H1 (cell line): ENCODE measurements at regions of chr4 and their contacts with region 1.

Region 1: GRCh38 chr4:184983672-184984356 is 34.5 kb upstream of the HELT start:
- DNase-seq: peak in 1 of 2 experiments; percentile 91
- H3K4me3 ChIP-seq: no peak overlapping the region
- H3K27ac ChIP-seq: no peak overlapping the region
- H3K4me1 ChIP-seq: peaks cover 0 to 3% (median 0%) of the 10 kb centered on the region in 4 experiments; a peak in 1 of 7 replicates
- H3K27me3 ChIP-seq: peaks cover 0 to 3% (median 0%) of the 10 kb centered on the region in 4 experiments; a peak in 2 of 7 replicates
- CTCF ChIP-seq: peak; percentile 31 to 51 (median 47)
- EP300 ChIP-seq: no peak
- POLR2A ChIP-seq: no peak
- RAD21 ChIP-seq: peak; percentile 73 to 78

Region 2: GRCh38 chr4:184745831-184746795 is 237.7 kb before region 1 on chr4:
- CTCF ChIA-PET with region 1: interaction called, 12 read pairs
- POLR2A ChIA-PET with region 1: interaction called, 3 read pairs
- DNase-seq: peak in 1 of 2 experiments; percentile 76
- H3K4me3 ChIP-seq: no peak overlapping the region
- H3K27ac ChIP-seq: no peak overlapping the region
- H3K4me1 ChIP-seq: peaks cover 8 to 21% (median 13%) of the 10 kb centered on the region in 4 experiments
- H3K27me3 ChIP-seq: no peaks in the 10 kb centered on the region; a peak in 2 of 7 replicates
- CTCF ChIP-seq: peak; percentile 60 to 73 (median 65)
- EP300 ChIP-seq: no peak
- POLR2A ChIP-seq: no peak
- RAD21 ChIP-seq: peak; percentile 84 to 87

Region 3: GRCh38 chr4:184838249-184839074 is 145.4 kb before region 1 on chr4:
- CTCF ChIA-PET with region 1: no interaction called
- POLR2A ChIA-PET with region 1: no interaction called
- DNase-seq: no peak
- H3K4me3 ChIP-seq: no peak overlapping the region
- H3K27ac ChIP-seq: no peak overlapping the region
- H3K4me1 ChIP-seq: no peaks in the 10 kb centered on the region
- H3K27me3 ChIP-seq: no peaks in the 10 kb centered on the region
- CTCF ChIP-seq: no peak
- EP300 ChIP-seq: no peak
- POLR2A ChIP-seq: no peak
- RAD21 ChIP-seq: no peak

Region 4: GRCh38 chr4:184994010-184994622 is 10.3 kb after region 1 on chr4:
- CTCF ChIA-PET with region 1: interaction called, 10 read pairs
- POLR2A ChIA-PET with region 1: no interaction called
- DNase-seq: no peak
- H3K4me3 ChIP-seq: no peak overlapping the region
- H3K27ac ChIP-seq: no peak overlapping the region
- H3K4me1 ChIP-seq: no peaks in the 10 kb centered on the region
- H3K27me3 ChIP-seq: no peaks in the 10 kb centered on the region
- CTCF ChIP-seq: no peak
- EP300 ChIP-seq: no peak
- POLR2A ChIP-seq: no peak
- RAD21 ChIP-seq: no peak